ENCODE measurements at regions of chr1 and their contacts with region 1.

Region 1: DNA sequence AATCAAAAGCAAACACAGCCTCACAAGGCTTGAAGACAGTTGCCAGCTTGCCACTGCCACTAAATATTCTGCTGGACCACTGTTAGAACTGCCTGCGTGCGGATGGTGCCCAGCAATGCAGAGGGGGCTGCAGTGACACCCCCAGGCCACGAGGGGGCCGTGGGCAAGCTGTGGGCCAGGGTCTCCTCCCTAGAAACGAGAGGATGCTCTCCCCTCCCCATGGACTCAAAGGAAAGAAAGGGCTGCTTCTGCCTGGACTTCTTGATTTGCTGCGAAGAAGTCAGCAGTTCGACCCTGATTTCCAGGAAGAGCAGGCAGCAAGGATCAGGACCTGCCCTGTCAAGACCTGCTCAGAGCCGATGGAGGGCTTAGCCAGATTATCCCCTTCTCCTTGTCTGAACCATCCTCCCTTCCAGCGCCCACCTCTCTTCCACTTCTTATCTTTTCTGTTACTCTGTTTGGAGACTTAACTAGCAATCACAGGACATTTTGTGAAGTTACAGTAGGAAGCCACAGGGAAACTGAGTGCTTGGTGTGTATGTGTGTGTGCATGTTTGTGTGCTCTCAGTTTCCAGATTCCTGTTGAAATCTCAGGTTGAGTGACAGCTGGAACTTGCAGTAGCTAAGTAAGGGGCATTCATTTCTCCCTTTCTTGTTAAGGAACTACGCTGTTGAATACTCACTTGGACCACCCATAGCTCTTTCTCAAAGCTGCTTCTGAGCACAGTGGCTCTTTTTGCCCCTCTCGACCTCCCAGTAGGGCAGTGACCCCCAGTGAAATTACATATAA is 2.7 kb downstream of the MAN1C1 start:
- DNase-seq: peak; percentile 70
- H3K4me3 Mint-ChIP-seq: peak overlapping the region; percentile 99
- H3K27ac Mint-ChIP-seq: peak overlapping the region; percentile 91
- H3K4me1 Mint-ChIP-seq: peaks cover 78% of the 10 kb centered on the region
- H3K27me3 Mint-ChIP-seq: peaks cover 34% of the 10 kb centered on the region

Region 2: DNA sequence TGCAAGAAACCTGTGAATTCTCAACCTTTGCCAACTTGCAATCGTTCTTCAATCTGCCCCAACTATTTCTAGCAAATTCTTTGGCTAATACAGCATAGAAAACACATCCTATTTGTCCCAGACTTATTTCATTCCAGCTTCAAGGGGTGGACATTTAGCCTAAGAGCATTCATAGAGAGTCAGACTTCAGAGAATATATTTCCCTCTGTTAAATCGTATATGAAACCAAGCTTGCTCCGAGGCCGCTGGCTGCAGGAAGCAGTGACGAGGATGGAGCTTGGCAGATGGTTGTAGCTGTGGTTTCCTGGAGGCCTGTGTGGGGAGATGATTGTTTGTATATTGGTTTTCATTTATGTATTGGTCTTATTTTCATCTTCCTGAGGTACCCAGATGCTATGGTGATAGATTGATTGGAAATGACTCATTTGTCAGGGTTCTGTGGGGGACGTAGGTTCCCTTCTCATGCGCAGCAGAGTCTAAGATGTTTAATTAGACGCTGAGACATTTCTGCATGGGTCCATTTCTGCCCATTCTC is 23.3 kb after region 1 on chr1:
- CTCF ChIA-PET with region 1: interaction called, 20 read pairs
- DNase-seq: peak; percentile 86
- H3K4me3 Mint-ChIP-seq: peak overlapping the region; percentile 59
- H3K27ac Mint-ChIP-seq: peak overlapping the region; percentile 93
- H3K4me1 Mint-ChIP-seq: peaks cover 70% of the 10 kb centered on the region
- H3K27me3 Mint-ChIP-seq: peaks cover 44% of the 10 kb centered on the region

Region 3: DNA sequence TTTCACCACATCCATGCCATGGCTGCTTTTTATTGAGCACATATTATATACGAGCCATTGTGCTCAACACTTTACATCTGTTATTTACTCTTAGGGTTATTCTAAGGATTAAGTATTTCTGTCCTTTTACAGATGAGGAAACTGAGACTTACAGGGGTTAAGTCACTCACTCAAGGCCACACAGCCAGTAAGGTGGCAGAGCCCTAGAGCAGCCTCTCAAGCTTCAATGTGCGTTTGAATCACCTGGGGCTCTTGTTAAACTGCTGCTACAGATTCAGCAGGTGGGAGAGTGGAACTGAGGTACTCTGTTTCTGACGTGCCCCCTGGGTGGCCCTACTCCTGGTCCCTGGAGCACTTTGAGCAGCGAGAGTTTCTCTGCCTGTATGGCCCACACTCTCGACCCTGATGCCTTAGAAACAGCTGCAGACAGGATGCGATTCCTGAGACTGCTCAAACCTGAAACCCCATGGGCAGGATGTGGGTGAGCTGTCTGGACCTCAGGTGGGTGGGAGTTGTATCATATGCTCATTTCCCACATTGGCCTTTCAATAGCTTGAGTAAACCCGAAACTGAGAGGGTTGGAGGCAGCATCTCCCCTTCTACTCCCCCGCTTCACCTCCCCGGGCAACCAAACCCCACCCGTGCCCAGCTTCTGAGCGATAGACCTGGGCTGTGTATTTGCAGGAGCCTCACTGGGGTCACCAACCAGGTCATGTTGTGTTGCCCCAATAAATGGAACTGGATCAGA is 56.6 kb after region 1 on chr1:
- CTCF ChIA-PET with region 1: interaction called, 19 read pairs
- DNase-seq: peak; percentile 92
- H3K4me3 Mint-ChIP-seq: peak overlapping the region; percentile 59
- H3K27ac Mint-ChIP-seq: peak overlapping the region; percentile 79
- H3K4me1 Mint-ChIP-seq: peaks cover 75% of the 10 kb centered on the region
- H3K27me3 Mint-ChIP-seq: peaks cover 55% of the 10 kb centered on the region

Region 4: DNA sequence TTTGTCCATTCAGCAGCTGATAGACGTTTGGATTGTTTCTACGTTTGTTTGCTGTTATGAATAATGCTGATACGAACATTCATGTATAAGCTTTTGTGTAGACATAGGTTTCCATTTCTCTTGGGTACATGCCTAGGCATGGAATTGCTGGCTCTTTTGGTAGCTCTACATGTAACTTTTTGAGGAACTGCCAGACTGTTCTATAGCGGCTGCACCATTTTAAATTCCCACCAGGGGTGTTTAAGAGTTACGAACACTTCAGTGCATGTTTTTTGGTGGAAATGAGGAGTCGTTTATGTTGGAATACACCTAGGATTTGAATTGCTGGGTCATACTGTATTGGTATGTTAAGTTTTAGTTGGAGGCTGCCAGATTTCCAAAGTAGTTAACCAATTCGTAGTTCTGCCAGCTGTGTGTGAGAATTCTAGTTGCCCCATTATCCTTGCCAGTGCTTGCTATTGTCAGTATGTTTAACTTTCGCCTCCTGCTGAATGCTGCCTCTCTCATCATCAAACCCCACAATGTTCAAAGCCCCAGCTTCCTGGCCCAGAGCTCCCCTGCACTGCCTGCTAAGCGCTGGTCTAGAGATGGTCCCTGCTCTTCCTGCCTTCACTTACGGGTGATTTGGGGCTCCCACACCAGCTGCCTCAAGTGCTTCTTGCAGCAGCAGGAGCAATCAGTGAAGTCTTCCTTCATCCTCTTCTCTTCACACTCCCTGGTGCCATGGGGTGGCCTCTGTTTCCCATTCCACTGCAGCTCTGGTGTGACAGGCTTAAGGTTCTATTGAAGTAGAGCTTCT is 78.3 kb after region 1 on chr1:
- CTCF ChIA-PET with region 1: interaction called, 10 read pairs
- DNase-seq: peak; percentile 51
- H3K4me3 Mint-ChIP-seq: no peak overlapping the region
- H3K27ac Mint-ChIP-seq: no peak overlapping the region
- H3K4me1 Mint-ChIP-seq: peaks cover 39% of the 10 kb centered on the region
- H3K27me3 Mint-ChIP-seq: peaks cover 14% of the 10 kb centered on the region

Region 5: DNA sequence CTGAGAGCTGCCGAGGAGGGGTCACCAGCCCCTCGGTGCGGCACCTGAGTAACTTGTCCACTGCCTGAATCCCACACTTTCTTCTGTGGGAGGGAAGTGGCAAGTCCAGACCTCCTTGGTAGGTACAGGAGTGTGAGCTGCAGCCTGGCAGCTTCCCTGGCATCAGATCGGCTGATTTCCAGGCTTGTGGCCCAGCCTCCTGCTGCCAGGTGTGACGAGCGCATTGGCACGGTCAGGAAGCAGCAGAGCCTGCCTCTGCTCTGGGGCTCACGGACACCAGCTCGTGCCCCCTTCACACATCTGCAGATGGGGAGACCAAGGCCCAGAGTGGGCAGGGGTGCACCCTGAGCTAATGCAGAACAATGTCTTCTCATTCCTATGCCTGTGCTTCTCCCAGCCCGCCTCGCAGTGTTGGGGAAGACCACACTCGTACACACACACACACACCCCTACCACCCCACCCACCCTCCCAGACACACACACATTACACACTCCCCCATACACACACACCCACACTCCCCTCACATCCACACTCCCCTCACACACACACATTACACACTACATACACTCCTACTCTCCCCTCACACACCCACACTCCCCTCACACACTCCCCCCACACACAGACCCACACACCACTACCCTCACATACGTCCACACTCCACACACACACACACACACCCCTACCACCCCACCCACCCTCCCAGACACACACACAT is 147.6 kb after region 1 on chr1:
- CTCF ChIA-PET with region 1: no interaction called
- DNase-seq: no peak
- H3K4me3 Mint-ChIP-seq: no peak overlapping the region
- H3K27ac Mint-ChIP-seq: no peak overlapping the region
- H3K4me1 Mint-ChIP-seq: peaks cover 36% of the 10 kb centered on the region
- H3K27me3 Mint-ChIP-seq: peaks cover 14% of the 10 kb centered on the region

Region 6: DNA sequence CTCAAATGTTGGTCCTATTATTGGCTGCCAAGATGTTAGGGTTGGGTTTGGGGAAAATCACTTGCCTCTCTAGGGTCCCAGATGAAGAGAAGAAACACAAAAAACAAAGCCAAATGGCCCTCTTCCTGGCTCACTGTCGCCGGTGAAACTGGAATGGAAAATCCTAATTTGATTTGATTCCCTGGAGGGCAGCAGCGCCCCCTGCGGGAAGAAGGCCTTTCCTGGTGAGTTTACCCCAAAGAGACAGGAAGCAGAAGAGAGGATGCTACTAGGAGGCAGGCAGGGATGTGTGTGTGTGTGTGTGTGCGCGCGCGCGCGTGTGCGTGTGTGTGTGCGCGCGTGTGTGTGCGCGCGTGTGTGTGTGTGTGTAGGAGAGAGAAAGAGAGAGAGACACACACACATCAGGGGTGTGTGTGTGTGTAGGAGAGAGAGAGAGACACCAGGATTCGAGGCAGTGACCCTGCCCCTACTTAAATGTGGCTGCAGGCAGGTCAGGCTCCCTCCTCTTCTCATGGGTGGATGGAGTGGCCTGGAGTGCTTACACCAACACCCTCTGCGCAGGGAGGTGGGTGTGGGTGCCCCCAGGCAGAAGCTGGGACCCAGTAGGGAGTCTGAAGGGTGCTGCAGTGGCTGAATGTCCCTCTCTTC is 177.6 kb after region 1 on chr1:
- CTCF ChIA-PET with region 1: interaction called, 32 read pairs
- DNase-seq: peak; percentile 92
- H3K4me3 Mint-ChIP-seq: peak overlapping the region; percentile 55
- H3K27ac Mint-ChIP-seq: peak overlapping the region; percentile 46
- H3K4me1 Mint-ChIP-seq: peaks cover 61% of the 10 kb centered on the region
- H3K27me3 Mint-ChIP-seq: peaks cover 17% of the 10 kb centered on the region

Measured in activated naive CD4-positive, alpha-beta T cell treated with anti-CD3 and anti-CD28 coated beads, Interleukin-2, amount 10 ng/mL, durations not matched to agents 7 days and 5 days (primary cell).